Activated T-helper 1 cell treated with anti-CD3 and anti-CD28 coated beads, Interleukin-12 subunit alpha, Interleukin-12 subunit beta, Interleukin-2, Interleukin-4 antibody, amounts not matched to agents 30 ng/mL and 10 ng/mL and 1 ng/mL, durations not matched to agents 14 hours and 24 hours and 36 hours (primary cell): ENCODE measurements at regions of chr5 and their contacts with region 1.

Region 1: GRCh38 chr5:68460147-68460798 is 244.7 kb downstream of the PIK3R1 start:
- DNase-seq: peak; percentile 11
- H3K4me3 Mint-ChIP-seq: no peak overlapping the region
- H3K27ac Mint-ChIP-seq: no peak overlapping the region
- H3K4me1 Mint-ChIP-seq: peaks cover 14% of the 10 kb centered on the region
- H3K27me3 Mint-ChIP-seq: peaks cover 6% of the 10 kb centered on the region

Region 2: GRCh38 chr5:67516948-67517565 is 943.2 kb before region 1 on chr5:
- intact Hi-C with region 1: loop called (anchors 10 kb)
- DNase-seq: no peak
- H3K4me3 Mint-ChIP-seq: no peak overlapping the region
- H3K27ac Mint-ChIP-seq: no peak overlapping the region
- H3K4me1 Mint-ChIP-seq: peaks cover 49% of the 10 kb centered on the region
- H3K27me3 Mint-ChIP-seq: peaks cover 7% of the 10 kb centered on the region

Region 3: DNA sequence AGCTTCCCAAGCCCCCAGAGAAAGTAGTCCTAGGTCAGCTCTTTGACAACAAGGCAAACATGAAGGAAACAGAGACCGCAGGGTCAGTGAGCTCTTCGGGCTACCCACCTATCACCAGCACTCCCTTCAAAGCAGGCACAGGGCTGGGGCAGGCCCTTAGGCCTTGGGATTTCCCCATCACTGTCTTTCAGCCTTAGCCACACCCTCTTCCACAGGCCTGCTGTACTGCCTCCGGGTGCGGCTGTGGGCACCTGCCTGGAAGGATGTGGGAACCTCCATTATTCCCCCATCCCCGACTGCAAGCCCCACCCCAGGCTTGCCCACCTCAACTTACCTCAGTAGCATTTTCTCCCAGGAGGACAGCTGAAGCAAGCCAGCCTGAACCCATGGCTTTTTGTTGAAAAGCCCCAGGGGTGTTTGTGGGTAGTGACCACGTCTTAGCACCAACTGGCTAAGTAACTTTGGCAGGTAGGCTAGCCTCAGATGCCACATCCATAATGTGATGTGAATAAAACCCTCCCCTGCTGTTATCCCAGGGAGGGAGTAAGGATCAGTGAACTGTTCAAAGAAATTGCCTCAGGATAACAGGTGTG is 144.5 kb before region 1 on chr5:
- intact Hi-C with region 1: loop called (anchors 1 kb)
- DNase-seq: peak; percentile 39
- H3K4me3 Mint-ChIP-seq: no peak overlapping the region
- H3K27ac Mint-ChIP-seq: no peak overlapping the region
- H3K4me1 Mint-ChIP-seq: peaks cover 18% of the 10 kb centered on the region
- H3K27me3 Mint-ChIP-seq: peaks cover 20% of the 10 kb centered on the region

Region 4: GRCh38 chr5:68369457-68370125 is 90.7 kb before region 1 on chr5:
- intact Hi-C with region 1: loop called (anchors 2 kb)
- DNase-seq: peak; percentile 48
- H3K4me3 Mint-ChIP-seq: peak overlapping the region; percentile 46
- H3K27ac Mint-ChIP-seq: peak overlapping the region; percentile 79
- H3K4me1 Mint-ChIP-seq: peaks cover 61% of the 10 kb centered on the region
- H3K27me3 Mint-ChIP-seq: peaks cover 1% of the 10 kb centered on the region

Region 5: GRCh38 chr5:68406767-68407241 is 53.5 kb before region 1 on chr5:
- intact Hi-C with region 1: loop called (anchors 2 kb)
- DNase-seq: no peak
- H3K4me3 Mint-ChIP-seq: peak overlapping the region; percentile 47
- H3K27ac Mint-ChIP-seq: peak overlapping the region; percentile 81
- H3K4me1 Mint-ChIP-seq: peaks cover 30% of the 10 kb centered on the region
- H3K27me3 Mint-ChIP-seq: peaks cover 2% of the 10 kb centered on the region

Region 6: GRCh38 chr5:68433923-68434879 is 26.1 kb before region 1 on chr5:
- intact Hi-C with region 1: loop called (anchors 1 kb)
- DNase-seq: peak; percentile 88
- H3K4me3 Mint-ChIP-seq: peak overlapping the region; percentile 16
- H3K27ac Mint-ChIP-seq: peak overlapping the region; percentile 88
- H3K4me1 Mint-ChIP-seq: peaks cover 53% of the 10 kb centered on the region
- H3K27me3 Mint-ChIP-seq: peaks cover 30% of the 10 kb centered on the region

Region 7: DNA sequence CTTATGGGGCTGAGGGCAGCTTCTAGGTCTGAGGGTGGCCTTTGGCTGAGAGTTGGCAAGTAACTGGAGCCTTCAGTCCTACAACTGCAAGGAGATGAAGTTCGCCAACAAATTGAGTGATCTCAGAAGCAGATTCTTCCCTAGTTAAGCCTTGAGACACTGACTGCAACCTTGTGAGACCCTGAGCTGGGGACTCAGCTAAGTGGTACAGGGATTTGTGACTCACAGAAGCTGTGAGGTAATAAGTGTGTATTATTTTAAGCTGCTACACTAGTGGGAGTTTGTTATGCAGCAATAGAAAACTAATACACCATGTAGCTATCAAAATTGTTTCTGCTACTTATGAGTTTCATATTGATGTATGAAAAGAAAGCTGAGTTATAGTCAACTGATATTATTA is 34.5 kb after region 1 on chr5:
- intact Hi-C with region 1: no loop called
- DNase-seq: no peak
- H3K4me3 Mint-ChIP-seq: no peak overlapping the region
- H3K27ac Mint-ChIP-seq: no peak overlapping the region
- H3K4me1 Mint-ChIP-seq: no peaks in the 10 kb centered on the region
- H3K27me3 Mint-ChIP-seq: peaks cover 6% of the 10 kb centered on the region

Region 8: DNA sequence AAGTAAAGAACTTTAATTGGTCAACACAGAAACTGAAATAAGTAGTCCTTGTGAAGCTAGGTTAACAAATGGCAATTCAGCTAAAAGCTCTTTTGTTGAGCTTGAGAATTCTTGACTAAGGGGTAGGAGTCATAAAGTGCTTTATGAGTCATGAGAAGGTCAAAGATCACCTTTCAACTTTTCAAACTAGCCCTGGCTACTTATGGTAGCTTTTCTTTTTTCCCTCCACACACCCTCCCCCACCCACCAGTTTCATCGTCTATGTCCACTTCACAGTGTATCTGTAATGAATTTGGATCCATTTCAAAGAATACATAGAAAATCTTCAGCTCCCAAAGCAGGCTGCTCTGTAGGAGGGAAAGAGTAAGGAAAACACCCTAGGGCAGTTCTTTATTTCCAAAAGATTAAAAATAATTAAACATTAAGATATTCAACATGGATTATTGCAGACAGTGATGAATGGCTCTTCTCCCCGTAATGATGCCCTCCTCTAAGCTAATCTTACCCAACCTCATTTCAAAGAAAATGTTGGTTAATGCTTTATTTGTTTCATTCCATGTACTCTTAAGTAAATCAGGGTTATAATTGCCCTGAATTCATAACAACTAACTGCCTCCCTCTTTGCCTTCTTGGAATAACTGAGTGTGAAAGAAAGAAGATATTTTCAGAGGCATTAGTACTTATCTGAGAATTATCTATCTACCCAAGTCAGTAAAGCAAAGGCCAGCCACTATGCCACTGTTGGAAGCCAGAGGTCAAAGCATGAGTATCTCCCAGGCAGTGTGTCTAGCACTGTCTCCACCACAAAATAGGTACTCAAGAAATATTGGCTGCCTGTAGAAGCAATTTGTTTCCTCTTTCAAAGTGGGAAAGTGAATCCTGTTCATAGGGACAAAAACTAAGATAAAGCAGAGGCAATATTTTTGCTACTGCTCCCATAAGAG is 45.9 kb after region 1 on chr5:
- intact Hi-C with region 1: no loop called
- DNase-seq: no peak
- H3K4me3 Mint-ChIP-seq: no peak overlapping the region
- H3K27ac Mint-ChIP-seq: no peak overlapping the region
- H3K4me1 Mint-ChIP-seq: no peaks in the 10 kb centered on the region
- H3K27me3 Mint-ChIP-seq: peaks cover 6% of the 10 kb centered on the region

Region 9: GRCh38 chr5:69007726-69008368 is 547.6 kb after region 1 on chr5:
- intact Hi-C with region 1: loop called (anchors 5 kb)
- DNase-seq: peak; percentile 49
- H3K4me3 Mint-ChIP-seq: no peak overlapping the region
- H3K27ac Mint-ChIP-seq: no peak overlapping the region
- H3K4me1 Mint-ChIP-seq: no peaks in the 10 kb centered on the region
- H3K27me3 Mint-ChIP-seq: peaks cover 16% of the 10 kb centered on the region